Head of caudate nucleus (tissue), 42 donors: ENCODE measurements at regions of chr1 and their contacts with region 1.

Region 1: DNA sequence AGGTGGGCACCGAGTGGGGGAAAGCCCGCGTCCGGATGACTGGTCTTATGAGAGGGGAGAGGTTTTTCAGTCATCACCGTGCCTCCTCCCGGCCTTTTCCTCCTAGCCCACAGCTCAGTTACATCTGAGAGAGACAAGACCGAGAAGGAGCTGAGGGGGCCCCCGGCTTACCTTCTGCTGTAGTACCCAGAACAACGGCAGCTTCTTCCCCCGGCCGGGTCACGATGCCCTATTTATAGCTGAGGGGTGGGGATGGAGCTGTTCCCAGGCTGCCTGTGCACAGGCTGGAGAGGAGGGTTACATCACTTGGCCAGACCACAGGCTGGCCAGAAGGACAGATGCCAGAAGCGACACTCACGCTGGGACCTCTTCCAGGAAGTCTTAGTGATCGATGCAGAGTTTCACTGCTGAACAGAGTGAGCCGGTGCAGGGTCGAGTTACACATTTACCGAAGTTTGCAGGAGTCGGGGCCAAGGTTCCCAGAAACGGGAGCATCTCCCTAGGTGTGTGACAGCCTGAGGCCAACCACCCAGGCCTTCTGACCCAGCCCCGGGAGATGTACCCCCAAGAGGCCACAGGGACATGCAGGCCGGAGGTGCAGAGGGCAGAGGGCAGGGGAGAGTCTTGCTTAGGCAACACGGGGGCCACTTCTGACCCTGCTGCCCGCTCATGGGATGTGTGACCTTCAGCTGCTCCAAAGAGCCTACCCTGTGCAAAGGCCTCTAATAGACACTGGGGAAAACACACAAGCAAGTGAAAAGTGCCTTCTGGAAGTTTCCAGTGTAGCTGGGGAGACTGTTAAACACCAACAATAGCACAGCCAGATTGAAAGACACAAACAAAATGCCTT is at the start of gene AGT:
- DNase-seq: peak; percentile 48 to 93 (median 82)

Region 2: DNA sequence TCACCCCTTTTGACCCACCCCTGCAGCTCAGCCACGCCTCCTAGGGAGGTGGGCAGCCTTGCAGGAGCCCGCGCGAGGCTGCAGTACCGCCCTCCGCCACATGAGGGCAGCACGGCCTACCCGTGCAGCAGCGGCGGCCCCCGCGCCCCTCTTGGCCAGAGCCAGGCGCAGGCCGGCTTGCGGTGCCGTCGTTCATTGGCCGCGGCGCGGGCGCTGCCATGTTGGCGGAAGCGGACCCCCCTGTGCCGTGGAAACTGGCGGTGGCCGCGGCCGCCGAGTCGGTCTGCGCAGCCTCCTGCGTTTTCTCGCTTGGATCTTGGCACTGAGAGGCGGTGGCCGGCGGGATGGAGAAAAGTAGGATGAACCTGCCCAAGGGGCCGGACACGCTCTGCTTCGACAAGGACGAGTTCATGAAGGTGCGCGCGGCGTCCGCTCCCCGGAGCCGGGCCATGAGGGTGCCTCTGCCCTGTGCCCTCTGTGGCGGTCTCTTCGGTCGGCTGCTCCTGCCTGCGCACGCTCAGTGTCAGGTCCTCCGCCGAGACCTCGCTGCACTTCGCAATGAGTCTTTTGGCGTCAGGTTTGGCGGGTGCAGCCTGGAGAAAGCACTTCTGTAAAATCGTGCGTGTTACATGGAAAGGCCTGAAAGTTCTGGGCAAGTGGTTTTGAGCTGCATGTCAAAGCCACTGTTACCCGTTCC is 71.7 kb before region 1 on chr1 and contains the start of gene COG2:
- intact Hi-C with region 1: loop called (anchors 5 kb)
- DNase-seq: peak; percentile 86 to 99 (median 96)

Region 3: GRCh38 chr1:230753586-230754251 is 39.6 kb after region 1 on chr1:
- intact Hi-C with region 1: loop called (anchors 5 kb)
- DNase-seq: peak in 29 of 42 donors; percentile 17 to 79 (median 55)

Region 4: GRCh38 chr1:230842846-230843245 is 128.7 kb after region 1 on chr1:
- intact Hi-C with region 1: no loop called
- DNase-seq: peak in 1 of 42 donors; percentile 55